Gastrocnemius medialis (tissue), 4 donors: ENCODE measurements at regions of chr15 and their contacts with region 1.

Region 1: GRCh38 chr15:30962079-30962478 is 29.3 kb downstream of the MTMR10 start:
- DNase-seq: peak; percentile 70 to 92
- ATAC-seq: peak; percentile 84 to 87
- H3K4me3 ChIP-seq: peak overlapping the region in 1 of 4 donors; percentile 14
- H3K27ac ChIP-seq: peak overlapping the region; percentile 84 to 95 (median 90)
- H3K4me1 ChIP-seq: peaks cover 36 to 39% of the 10 kb centered on the region in 2 donors
- H3K27me3 ChIP-seq: no peaks in the 10 kb centered on the region
- CTCF ChIP-seq: no peak
- POLR2A ChIP-seq: peak in 1 of 2 donors; percentile 19

Region 2: DNA sequence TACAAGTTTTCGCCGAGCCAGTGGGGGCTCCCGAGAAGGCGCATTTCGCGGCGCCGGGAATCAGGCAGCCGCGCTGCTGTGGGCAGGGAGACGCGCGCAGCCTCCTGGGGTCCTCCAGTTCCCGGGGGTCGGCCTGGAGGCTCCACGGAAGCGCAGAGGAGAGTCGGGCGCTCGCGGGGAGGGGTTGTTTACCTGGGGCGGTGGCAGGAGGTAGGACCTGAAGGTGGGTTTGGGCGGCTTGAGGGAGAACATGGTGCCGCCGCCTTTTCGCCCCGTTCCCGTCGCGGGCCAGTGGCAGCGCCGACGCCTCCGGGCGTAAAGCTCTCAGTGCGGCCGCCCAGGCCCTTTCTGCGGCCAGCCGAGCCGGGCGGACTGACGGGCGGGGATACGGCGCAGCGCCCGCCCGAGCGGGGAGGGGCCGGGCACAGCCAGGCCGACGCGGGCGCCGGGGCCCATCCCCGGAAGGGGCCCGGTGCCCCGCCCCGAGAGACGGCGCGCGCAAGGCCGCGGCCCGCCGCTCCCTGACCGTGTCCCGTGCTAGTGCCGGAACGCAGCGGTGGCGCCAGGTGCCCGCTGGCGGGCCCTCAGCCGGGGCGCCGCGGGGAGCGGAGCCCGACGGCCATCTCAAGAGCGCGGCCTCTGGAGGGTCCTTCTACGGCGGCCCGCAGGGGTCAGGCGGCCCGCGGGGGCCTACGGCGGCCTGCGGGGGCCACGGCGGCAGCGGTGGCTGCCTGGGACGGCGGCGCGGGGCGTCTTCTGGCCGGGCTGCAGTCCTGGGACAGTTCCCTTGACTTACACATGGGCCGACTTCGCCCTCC is 29.4 kb after region 1 on chr15 and contains the start of gene MTMR10:
- in situ Hi-C with region 1: no loop called
- intact Hi-C with region 1: loop called (anchors 1 kb)
- DNase-seq: peak; percentile 41 to 76
- ATAC-seq: peak; percentile 84 to 87
- H3K4me3 ChIP-seq: peak within 1 kb of the TSS; percentile 83 to 100 (median 92)
- H3K27ac ChIP-seq: peak within 1 kb of the TSS; percentile 94 to 99 (median 96)
- H3K4me1 ChIP-seq: peaks cover 45 to 52% of the 10 kb centered on the region in 2 donors
- H3K27me3 ChIP-seq: no peaks in the 10 kb centered on the region
- CTCF ChIP-seq: peak in 3 of 5 experiments; percentile 24 to 65 (median 56)
- POLR2A ChIP-seq: peak; percentile 95 to 96
- total RNA-seq, gene MTMR10: 36.6 to 63.4 (median 40.4) TPM

Region 3: DNA sequence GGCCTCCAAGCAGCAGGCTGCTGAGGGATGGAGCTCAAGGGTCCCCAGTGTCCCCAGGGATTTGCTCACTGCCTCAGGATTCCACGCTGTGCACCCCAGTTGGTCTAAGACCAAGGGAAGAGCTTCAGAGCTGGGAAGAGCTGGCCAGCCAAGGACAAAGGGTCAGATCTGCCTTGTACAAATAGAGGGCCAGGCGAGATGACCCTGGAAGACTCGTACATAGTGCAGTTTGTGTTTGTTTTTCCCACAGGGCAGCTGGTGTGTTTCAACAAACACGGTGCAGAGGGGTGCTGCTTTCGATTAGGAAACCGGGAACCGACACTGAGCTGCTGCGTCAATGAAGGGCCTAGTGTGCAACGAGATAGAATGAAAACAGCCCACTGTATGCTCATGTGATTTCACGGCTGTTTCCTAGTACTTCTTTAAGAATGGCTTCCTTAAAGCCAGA is 195.6 kb after region 1 on chr15:
- in situ Hi-C with region 1: no loop called
- intact Hi-C with region 1: loop called (anchors 2 kb)
- DNase-seq: no peak
- ATAC-seq: no peak
- H3K4me3 ChIP-seq: no peak overlapping the region
- H3K27ac ChIP-seq: no peak overlapping the region
- H3K4me1 ChIP-seq: peaks cover 10 to 12% of the 10 kb centered on the region in 2 donors
- H3K27me3 ChIP-seq: no peaks in the 10 kb centered on the region
- CTCF ChIP-seq: no peak
- POLR2A ChIP-seq: no peak

Region 4: GRCh38 chr15:31296646-31297574 is 334.8 kb after region 1 on chr15:
- in situ Hi-C with region 1: no loop called
- intact Hi-C with region 1: no loop called
- DNase-seq: peak in 1 of 2 donors; percentile 11
- ATAC-seq: no peak
- H3K4me3 ChIP-seq: no peak overlapping the region
- H3K27ac ChIP-seq: no peak overlapping the region
- H3K4me1 ChIP-seq: peaks cover 6% of the 10 kb centered on the region in 2 donors
- H3K27me3 ChIP-seq: no peaks in the 10 kb centered on the region
- CTCF ChIP-seq: no peak
- POLR2A ChIP-seq: no peak

Region 5: DNA sequence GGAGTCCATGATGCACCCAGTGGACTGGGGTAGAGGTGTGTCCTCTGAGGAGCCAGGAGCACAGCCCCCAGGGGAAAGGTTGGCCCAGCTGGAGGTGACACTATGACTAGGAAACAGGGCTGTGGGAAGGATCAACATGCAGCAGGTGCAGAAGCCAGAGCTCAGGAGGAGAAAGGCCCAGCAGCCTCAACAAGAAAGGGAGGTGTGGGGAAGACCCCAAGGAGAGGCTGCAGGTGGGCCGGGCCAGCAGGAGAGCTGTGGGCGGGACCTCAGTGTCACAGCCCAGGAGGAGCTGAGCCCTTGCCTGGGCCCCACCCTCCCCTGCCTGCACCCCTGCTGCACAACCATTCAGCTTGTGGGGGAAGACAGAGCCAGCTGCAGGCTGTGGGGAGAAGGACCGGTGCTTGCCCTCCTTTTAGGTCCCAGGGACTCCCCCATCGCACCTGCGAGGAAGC is 346.1 kb after region 1 on chr15:
- in situ Hi-C with region 1: no loop called
- intact Hi-C with region 1: no loop called
- DNase-seq: peak in 1 of 2 donors; percentile 5
- ATAC-seq: no peak
- H3K4me3 ChIP-seq: no peak overlapping the region
- H3K27ac ChIP-seq: no peak overlapping the region
- H3K4me1 ChIP-seq: no peaks in the 10 kb centered on the region
- H3K27me3 ChIP-seq: peaks cover 0 to 4% (median 3%) of the 10 kb centered on the region in 3 donors
- CTCF ChIP-seq: no peak
- POLR2A ChIP-seq: no peak